ENCODE measurements at regions of chr2 and their contacts with region 1.

Region 1: DNA sequence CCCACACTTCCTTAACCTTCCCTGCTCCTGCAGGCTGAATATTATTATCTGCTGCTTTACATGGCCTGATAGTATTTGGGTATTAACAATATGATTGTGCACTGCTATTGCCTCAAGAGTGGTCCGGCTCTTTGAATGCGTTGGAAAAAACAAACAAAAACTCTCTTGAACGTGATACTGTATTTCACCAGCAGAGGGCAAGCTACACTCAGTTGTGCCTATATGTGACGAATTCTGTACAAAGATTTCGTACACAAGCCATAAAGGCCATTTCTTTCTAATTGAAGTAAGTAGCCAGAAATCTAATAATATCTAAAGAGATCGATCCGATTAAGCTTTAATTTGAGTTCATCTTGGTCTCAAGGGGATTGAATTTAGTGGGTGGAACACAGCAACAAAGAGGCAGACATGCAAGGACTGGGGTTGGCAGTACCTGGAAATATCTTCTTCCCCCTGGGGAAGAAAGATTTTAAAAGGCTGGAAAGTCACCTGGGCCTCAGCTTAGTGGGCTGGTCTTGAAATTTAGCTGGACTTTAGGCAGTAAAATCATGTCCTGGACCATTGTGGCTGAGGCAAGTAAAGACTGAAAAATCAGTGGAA is 49.3 kb upstream of the RAB6D start:
- DNase-seq: no peak
- ATAC-seq: peak in 2 of 4 donors; percentile 54 to 58
- H3K4me3 ChIP-seq: no peak overlapping the region
- H3K27ac ChIP-seq: no peak overlapping the region
- H3K4me1 ChIP-seq: no peaks in the 10 kb centered on the region
- H3K27me3 ChIP-seq: peaks cover 0 to 30% (median 5%) of the 10 kb centered on the region in 9 donors
- CTCF ChIP-seq: peak; percentile 58 to 87 (median 76)
- POLR2A ChIP-seq: no peak

Region 2: DNA sequence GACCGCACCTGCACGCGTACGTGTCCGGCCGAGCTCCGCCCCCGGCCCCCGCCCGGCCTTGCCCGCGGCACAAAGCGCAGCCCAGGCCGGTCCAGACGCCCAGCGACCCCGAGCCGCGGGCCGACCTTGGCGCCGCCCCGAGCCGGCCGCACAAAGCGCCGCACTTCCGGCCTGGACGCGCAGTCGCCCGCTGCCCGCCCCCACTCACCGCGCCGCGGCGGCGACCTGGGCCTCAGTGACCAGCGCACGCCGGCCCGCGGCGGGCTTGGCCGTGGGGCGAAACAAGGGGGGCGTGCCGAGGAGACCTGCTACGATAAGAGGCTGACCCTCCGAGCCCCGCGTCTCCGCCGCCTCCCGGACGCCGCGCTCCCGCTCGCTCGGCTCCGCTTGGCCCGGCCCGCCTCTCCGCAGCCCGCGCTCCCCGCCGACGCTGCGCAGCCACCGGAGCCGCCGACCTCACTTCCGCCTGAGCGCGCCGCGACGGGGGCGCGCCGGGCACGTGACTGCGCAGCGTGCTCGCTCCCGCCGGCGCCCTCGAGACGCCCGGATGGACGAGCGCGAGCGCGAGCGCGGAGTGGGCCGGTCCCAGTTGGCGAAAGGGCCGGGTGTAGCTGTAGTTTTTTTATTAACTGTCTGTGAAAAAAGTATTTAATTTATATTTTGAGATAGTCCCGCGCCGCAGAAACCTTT is 320.1 kb before region 1 on chr2 and contains the start of gene FAM168B:
- intact Hi-C with region 1: no loop called
- DNase-seq: peak; percentile 90 to 95 (median 93)
- ATAC-seq: peak; percentile 94 to 98 (median 97)
- H3K4me3 ChIP-seq: peak within 1 kb of the TSS; percentile 52 to 99 (median 86)
- H3K27ac ChIP-seq: peak within 1 kb of the TSS; percentile 84 to 99 (median 98)
- H3K4me1 ChIP-seq: peaks cover 0 to 22% (median 16%) of the 10 kb centered on the region in 12 donors
- H3K27me3 ChIP-seq: no peaks in the 10 kb centered on the region
- CTCF ChIP-seq: no peak
- POLR2A ChIP-seq: peak; percentile 58 to 88
- total RNA-seq, gene FAM168B: 72.7 to 174 (median 86.9) TPM

Region 3: GRCh38 chr2:131154071-131154531 is 259.1 kb before region 1 on chr2:
- intact Hi-C with region 1: loop called in 1 of 10 experiments (anchors 10 kb)
- DNase-seq: peak in 3 of 5 donors; percentile 54 to 74 (median 58)
- ATAC-seq: peak; percentile 72 to 90 (median 84)
- H3K4me3 ChIP-seq: no peak overlapping the region
- H3K27ac ChIP-seq: no peak overlapping the region
- H3K4me1 ChIP-seq: peaks cover 0 to 4% (median 0%) of the 10 kb centered on the region in 12 donors
- H3K27me3 ChIP-seq: no peaks in the 10 kb centered on the region
- CTCF ChIP-seq: peak; percentile 51 to 85 (median 73)
- POLR2A ChIP-seq: no peak

Region 4: GRCh38 chr2:131492418-131493198 is 79.4 kb after region 1 on chr2:
- intact Hi-C with region 1: loop called in 3 of 10 experiments (anchors 5 to 10 kb)
- DNase-seq: peak; percentile 92 to 96 (median 93)
- ATAC-seq: peak; percentile 86 to 96 (median 88)
- H3K4me3 ChIP-seq: peak overlapping the region; percentile 65 to 97 (median 84)
- H3K27ac ChIP-seq: peak overlapping the region; percentile 82 to 96 (median 88)
- H3K4me1 ChIP-seq: peaks cover 2 to 63% (median 24%) of the 10 kb centered on the region in 12 donors
- H3K27me3 ChIP-seq: no peaks in the 10 kb centered on the region
- CTCF ChIP-seq: peak; percentile 56 to 87 (median 75)
- POLR2A ChIP-seq: peak in 1 of 2 donors; percentile 59

Region 5: GRCh38 chr2:131517106-131517831 is 104.0 kb after region 1 on chr2:
- intact Hi-C with region 1: loop called in 6 of 10 experiments (anchors 2 to 10 kb)
- DNase-seq: peak in 1 of 5 donors; percentile 55
- ATAC-seq: no peak
- H3K4me3 ChIP-seq: no peak overlapping the region
- H3K27ac ChIP-seq: no peak overlapping the region
- H3K4me1 ChIP-seq: peaks cover 0 to 6% (median 0%) of the 10 kb centered on the region in 12 donors
- H3K27me3 ChIP-seq: no peaks in the 10 kb centered on the region
- CTCF ChIP-seq: no peak
- POLR2A ChIP-seq: no peak

Region 6: DNA sequence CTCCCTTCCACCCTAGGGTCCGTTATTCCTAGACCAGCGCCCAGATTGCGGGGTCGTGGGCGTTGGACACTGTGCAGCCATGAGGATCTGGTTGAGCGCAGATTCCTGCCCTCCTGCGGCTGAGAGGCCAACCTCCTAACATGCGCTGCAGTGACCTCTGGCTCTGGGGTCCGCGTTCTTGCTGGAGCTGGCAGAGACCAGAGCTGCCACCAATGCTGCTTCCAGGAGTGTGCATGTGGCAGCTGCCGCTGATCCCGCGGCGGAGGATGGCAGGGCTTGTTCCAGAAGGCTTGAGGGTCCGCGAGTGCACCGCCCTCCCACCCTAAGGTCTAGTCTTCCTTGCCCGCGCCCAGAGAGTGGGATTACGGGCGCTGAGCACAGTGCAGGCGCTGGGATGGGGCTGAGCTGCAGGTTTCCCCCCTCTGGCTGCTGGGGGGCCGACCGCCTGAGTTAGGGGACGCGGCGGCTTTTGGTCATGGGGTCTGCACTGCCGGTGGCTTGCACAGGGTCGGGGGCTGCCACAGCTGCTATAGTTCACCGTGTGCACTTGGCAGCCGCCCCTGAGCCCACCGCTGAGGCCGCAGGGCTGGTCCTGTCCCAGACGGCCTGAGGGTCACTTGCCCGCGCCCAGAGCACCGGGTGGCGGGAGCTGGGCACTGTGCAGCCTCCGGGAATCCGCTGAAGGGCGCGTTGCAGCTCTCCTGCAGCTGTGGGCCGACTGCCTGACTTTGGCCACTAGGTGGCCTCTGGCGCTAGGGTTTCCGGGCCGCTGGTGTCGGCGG is 260.3 kb after region 1 on chr2:
- intact Hi-C with region 1: loop called in 8 of 10 experiments (anchors 2 to 5 kb)
- DNase-seq: peak; percentile 76 to 90 (median 80)
- ATAC-seq: peak; percentile 80 to 98 (median 94)
- H3K4me3 ChIP-seq: peak overlapping the region; percentile 14 to 49 (median 41)
- H3K27ac ChIP-seq: no peak overlapping the region
- H3K4me1 ChIP-seq: peaks cover 0 to 33% (median 21%) of the 10 kb centered on the region in 12 donors
- H3K27me3 ChIP-seq: peaks cover 0 to 24% (median 4%) of the 10 kb centered on the region in 9 donors
- CTCF ChIP-seq: peak; percentile 82 to 94 (median 88)
- POLR2A ChIP-seq: no peak

Region 7: DNA sequence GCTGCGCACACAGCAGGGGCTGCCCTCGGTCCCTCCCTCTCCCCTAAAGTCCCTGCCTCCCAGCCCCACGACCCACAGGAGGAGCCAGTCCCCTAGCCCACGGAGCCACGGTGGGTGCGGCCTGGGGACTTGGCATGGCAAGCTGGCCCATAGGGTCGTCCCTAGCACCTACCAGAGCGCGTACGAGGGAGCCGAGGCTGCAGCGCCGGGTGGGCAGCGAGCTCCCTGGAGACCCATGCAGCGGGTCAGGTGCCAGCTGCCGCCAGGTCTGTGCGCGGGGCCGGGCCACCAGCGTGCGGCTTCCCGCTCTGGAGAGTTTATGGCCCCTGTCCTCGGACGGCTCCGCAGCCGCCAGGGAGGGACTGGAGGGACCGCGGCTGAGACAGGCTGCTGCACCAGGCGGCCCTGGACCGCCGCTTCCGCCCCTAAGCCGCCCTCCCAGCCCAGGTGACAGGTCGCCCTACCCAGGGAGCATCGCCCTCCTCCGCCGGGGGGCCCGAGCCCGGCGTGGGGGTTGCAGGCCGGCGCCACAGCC is 388.0 kb after region 1 on chr2:
- intact Hi-C with region 1: loop called in 3 of 10 experiments (anchors 5 to 10 kb)
- DNase-seq: no peak
- ATAC-seq: no peak
- H3K4me3 ChIP-seq: peak overlapping the region in 6 of 12 donors; percentile 17 to 54 (median 38)
- H3K27ac ChIP-seq: no peak overlapping the region
- H3K4me1 ChIP-seq: peaks cover 0 to 14% (median 2%) of the 10 kb centered on the region in 12 donors
- H3K27me3 ChIP-seq: peaks cover 0 to 8% (median 4%) of the 10 kb centered on the region in 9 donors
- CTCF ChIP-seq: no peak
- POLR2A ChIP-seq: no peak